Panc1 (cell line): ENCODE measurements at regions of chr7 and their contacts with region 1.

Region 1: GRCh38 chr7:78226059-78226719 is 427.6 kb downstream of the PHTF2 start:
- DNase-seq: peak; percentile 8
- ATAC-seq: 0 out of 2 replicates have a peak, but pooled peaks have one; percentile 53
- H3K4me3 ChIP-seq: no peak overlapping the region
- H3K27ac ChIP-seq: no peak overlapping the region
- H3K4me1 ChIP-seq: no peaks in the 10 kb centered on the region
- H3K27me3 ChIP-seq: no peaks in the 10 kb centered on the region; the same call in none of the 2 replicates
- CTCF ChIP-seq: peak; percentile 79

Region 2: DNA sequence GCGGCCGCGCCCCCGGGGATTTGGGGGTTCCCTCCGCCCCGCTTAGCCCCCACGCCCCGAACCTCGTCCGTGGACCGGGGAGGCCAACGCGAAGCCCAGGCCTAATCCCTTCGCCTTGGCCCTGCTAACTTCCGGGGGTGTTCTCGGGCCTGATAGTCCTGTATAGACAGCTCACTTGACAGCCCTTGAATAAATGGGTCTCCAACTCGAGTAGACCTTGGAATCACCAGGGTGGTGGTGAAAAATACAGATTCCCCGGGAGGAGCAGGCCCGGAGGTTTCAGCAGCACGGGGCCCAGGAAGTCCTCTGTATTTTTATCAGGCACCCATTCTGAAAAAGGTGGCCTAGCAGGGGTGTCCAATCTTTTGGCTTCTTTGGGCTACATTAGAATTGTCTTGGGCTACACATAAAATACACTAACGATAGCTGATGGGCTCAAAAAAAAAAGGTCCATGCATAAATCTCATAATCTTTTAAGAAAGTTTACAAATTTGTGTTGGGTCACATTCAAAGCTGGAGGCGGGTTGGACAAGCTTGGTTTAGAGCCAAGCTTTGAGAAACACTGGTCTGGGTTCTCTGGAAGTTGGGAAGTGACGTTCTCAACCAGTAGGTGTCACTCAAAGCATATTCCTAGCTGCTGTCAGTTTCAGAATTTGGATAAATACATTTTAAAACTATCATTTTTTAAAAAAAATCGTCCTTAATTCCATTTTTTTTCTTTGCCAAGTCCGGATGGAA is 205.9 kb before region 1 on chr7:
- CTCF ChIA-PET with region 1: no interaction called
- POLR2A ChIA-PET with region 1: no interaction called
- in situ Hi-C with region 1: no loop called
- intact Hi-C with region 1: loop called (anchors 5 kb)
- DNase-seq: peak; percentile 74
- ATAC-seq: peak; percentile 74
- H3K4me3 ChIP-seq: peak overlapping the region; percentile 52 to 71
- H3K27ac ChIP-seq: peak overlapping the region; percentile 77
- H3K4me1 ChIP-seq: peaks cover 13% of the 10 kb centered on the region
- H3K27me3 ChIP-seq: peaks cover 29% of the 10 kb centered on the region
- CTCF ChIP-seq: peak; percentile 88